ENCODE measurements at regions of chr3 and their contacts with region 1.

Region 1: DNA sequence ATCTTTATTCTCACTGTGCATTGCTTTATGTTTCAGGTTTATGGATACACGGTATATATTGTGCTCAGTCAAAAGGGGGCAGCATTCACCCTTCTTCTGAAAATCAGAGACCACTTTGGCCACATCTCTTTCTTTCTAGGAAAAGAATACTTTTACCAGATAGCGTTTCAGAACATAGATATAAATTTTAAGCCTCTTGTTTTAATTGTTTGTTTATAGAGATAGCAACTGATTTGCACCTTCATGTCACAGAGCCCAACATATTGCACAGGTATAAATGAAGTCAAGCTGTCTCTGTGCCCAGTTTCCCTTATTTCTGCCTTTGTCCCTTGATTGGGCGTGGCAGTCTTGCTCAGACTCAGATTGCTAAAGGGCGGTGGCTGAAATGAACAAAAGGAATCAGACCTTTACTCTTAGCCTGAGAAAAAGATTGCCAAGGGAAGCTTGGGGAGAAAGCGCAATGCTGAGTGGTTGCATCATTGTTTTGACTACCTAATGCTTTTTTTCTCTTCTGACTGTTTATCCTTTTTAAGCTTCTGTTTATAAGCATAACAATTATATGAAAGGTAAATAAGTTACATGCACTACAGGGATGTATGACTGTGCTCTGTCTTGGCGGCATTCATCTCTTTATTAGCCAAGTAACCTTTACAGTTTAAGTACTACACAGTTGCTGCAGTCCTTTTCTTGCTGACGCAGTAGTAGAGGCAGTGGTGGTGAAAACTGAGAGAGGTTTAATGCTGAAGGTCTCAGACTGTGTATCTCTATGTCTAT is 70.8 kb upstream of the ZBTB20 start:
- DNase-seq: peak; percentile 32
- ATAC-seq: peak; percentile 79 to 82

Region 2: DNA sequence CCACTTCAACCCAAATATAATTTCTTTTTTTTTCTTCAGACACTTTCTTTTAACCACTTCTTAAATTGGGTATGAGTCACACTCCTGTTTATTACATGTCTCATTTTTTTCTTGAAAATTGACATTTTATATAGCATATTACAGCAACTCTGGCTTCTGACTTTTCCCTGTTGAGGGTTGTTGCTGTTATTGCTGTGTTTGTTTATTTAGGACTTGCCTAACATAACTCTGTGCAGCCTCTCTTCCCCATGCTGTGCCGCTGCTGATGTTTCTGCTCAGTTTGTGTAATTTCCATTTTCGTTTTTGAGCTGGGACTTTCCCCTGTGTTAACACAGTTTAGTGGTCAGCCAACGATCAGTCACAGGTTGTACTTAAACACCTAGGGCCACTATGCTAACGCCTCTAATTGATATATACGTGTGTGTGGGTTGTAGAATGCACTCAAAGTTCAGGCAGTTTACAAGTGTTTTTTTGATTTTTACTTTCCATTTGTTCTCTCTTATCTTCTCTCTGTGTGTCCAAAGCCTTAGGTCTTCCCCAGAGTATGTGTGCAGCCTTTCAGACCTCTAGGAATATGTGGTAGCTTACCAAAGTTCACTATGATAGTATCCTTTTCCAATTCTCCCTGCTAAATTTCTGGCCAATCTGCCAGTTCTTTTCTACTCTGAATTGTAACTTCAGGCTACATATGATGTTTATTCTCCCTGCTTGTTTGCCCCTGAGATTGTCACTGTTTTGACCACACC is 408.0 kb before region 1 on chr3:
- intact Hi-C with region 1: no loop called
- DNase-seq: no peak
- ATAC-seq: no peak

Region 3: GRCh38 chr3:115571413-115571812 is 353.5 kb after region 1 on chr3:
- intact Hi-C with region 1: loop called in 1 of 2 experiments (anchors 10 kb)
- DNase-seq: no peak
- ATAC-seq: no peak

Region 4: DNA sequence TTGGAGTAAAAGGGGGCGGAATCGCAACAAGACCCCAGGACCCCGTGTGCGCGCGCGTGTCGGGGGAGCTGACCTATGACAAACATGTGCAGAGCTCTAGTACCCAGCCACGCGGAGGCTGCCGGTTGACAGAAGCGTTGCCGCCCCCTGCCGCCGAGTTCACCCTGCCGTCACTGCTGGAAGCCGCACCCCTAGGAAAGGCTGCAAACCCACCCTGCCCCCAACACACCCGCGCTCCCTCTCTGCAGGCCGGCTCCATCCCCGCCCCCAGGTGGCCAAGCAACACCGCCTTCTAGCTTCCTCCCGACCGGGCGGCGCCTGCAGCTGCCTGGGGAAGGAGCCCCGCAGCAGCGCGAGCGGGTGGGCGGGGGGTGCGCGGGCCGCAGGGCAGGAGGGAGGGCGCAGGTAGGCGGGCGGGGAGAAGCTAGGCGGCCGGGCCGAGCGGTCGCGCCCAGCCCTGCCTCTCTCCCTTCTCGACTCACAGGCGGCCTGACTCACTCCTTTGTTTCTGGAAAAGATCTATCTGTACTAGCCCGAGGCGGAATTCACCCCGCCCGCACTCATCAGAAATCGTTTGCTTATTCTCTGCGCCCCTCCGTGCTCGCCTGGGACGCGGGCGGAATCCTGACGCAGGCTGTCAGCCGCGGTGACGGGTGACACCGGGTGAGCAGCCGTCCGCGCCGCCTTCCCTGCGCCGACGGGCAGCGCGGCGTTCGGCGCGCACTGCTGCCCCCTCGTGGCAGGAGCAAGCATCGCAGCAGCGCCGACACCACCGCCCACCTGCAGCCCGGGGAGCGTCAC is 566.3 kb after region 1 on chr3:
- intact Hi-C with region 1: loop called in 1 of 2 experiments (anchors 2 kb)
- DNase-seq: peak; percentile 93
- ATAC-seq: peak; percentile 94 to 96

Region 5: GRCh38 chr3:115819785-115820384 is 602.0 kb after region 1 on chr3:
- intact Hi-C with region 1: loop called in 1 of 2 experiments (anchors 5 kb)
- DNase-seq: peak; percentile 61
- ATAC-seq: peak; percentile 85 to 89